GM12878 (cell line): ENCODE measurements at regions of chr2 and their contacts with region 1.

Region 1: DNA sequence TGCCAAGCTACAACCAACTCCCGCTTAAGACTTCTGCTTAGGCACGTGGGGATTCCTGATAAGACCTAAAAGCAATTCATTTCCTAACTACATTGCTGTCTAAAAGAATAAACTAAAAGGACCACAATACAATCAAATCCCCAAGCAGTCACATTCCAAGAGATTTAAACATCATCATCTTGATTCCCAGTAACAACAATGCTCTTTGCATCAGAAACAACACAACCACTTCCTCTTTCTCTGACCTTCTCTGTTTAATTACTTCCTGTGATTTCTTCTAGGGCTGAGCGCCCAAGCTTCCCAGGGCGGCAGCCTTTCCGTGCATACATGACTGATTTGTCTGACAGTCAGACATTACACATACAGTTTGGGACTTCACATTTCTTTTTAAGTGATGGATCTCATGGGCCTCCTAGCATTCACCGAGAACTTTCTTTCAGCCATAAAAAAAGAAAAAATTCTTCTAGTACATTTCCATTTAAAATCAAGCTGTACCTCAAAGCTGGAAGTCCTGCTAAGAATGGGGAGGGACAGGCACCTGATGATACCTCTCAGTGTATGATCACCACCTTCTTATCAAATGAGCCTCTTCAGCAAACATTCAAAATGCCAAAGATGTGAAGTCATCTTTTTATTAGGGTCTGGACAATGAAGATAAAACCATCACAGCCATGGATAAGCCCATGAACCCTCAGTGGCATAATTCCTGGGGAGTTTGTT is 11.5 kb downstream of the SPRED2 start:
- DNase-seq: no peak
- ATAC-seq: peak; percentile 85
- H3K4me3 ChIP-seq: peak overlapping the region; percentile 3; the same call in 1 of the 2 replicates
- H3K27ac ChIP-seq: peak overlapping the region; percentile 49
- H3K4me1 ChIP-seq: peaks cover 28% of the 10 kb centered on the region
- H3K27me3 ChIP-seq: no peaks in the 10 kb centered on the region
- CTCF ChIP-seq: no peak
- EP300 ChIP-seq: peak; percentile 19 to 32; a peak in 1 of 4 replicates
- POLR2A ChIP-seq: no peak
- RAD21 ChIP-seq: 0 out of 2 replicates have a peak, but pooled peaks have one; percentile 2

Region 2: GRCh38 chr2:65396348-65397026 is 24.4 kb before region 1 on chr2:
- CTCF ChIA-PET with region 1: interaction called, 4 read pairs
- POLR2A ChIA-PET with region 1: interaction called, 13 read pairs
- RAD21 ChIA-PET with region 1: interaction called, 15 read pairs
- SMC1A ChIA-PET with region 1: interaction called, 27 read pairs
- in situ Hi-C with region 1: no loop called
- intact Hi-C with region 1: no loop called
- DNase-seq: no peak
- ATAC-seq: peak; percentile 31
- H3K4me3 ChIP-seq: no peak overlapping the region
- H3K27ac ChIP-seq: peak overlapping the region; percentile 22
- H3K4me1 ChIP-seq: peaks cover 53% of the 10 kb centered on the region
- H3K27me3 ChIP-seq: no peaks in the 10 kb centered on the region
- CTCF ChIP-seq: no peak
- EP300 ChIP-seq: no peak
- POLR2A ChIP-seq: no peak
- RAD21 ChIP-seq: no peak

Region 3: DNA sequence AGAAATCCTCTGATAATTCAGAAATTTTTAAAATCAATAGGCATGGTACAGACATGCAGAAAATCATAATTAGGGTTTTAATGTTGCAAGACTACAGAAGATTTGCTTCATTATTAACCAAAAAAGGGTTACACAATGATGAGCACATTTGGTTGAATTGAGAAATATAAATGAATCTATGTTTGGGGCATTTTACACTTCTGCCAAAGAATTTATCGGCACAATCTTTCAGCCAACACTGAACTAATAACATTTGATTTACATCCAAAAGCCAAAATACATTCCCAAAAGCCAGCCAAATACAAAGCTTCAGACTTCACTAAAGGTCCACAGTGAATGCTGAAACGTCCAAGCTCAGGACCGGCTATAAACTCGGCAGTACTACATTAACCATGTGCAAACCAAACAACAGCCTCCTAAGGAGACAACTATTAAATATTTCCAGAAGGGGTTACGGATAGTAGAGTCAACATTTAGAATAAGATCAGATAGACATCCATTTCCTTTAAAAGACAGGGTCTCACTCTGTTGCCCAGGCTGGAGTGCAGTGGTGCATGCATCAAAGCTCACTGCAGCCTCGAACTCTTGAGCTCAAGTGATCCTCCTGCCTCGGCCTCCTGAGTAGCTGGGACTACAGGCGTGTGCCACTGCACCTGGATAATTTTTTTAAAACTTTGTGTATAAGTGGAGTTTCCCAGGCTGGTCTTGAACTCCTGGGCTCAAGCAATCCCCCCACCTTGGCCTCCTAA is 17.9 kb before region 1 on chr2:
- CTCF ChIA-PET with region 1: interaction called, 16 read pairs
- POLR2A ChIA-PET with region 1: interaction called, 25 read pairs
- RAD21 ChIA-PET with region 1: interaction called, 29 read pairs
- SMC1A ChIA-PET with region 1: interaction called, 54 read pairs
- in situ Hi-C with region 1: no loop called
- intact Hi-C with region 1: no loop called
- DNase-seq: no peak
- ATAC-seq: no peak
- H3K4me3 ChIP-seq: no peak overlapping the region
- H3K27ac ChIP-seq: no peak overlapping the region
- H3K4me1 ChIP-seq: peaks cover 22% of the 10 kb centered on the region
- H3K27me3 ChIP-seq: no peaks in the 10 kb centered on the region
- CTCF ChIP-seq: no peak
- EP300 ChIP-seq: no peak
- POLR2A ChIP-seq: no peak
- RAD21 ChIP-seq: no peak

Region 4: GRCh38 chr2:65450393-65450792 is 29.5 kb after region 1 on chr2:
- CTCF ChIA-PET with region 1: no interaction called
- POLR2A ChIA-PET with region 1: no interaction called
- RAD21 ChIA-PET with region 1: no interaction called
- SMC1A ChIA-PET with region 1: no interaction called
- in situ Hi-C with region 1: no loop called
- intact Hi-C with region 1: no loop called
- DNase-seq: no peak
- ATAC-seq: no peak
- H3K4me3 ChIP-seq: no peak overlapping the region
- H3K27ac ChIP-seq: no peak overlapping the region
- H3K4me1 ChIP-seq: no peaks in the 10 kb centered on the region
- H3K27me3 ChIP-seq: no peaks in the 10 kb centered on the region; a peak in 2 of 4 replicates
- CTCF ChIP-seq: no peak
- EP300 ChIP-seq: no peak
- POLR2A ChIP-seq: no peak
- RAD21 ChIP-seq: no peak

Region 5: DNA sequence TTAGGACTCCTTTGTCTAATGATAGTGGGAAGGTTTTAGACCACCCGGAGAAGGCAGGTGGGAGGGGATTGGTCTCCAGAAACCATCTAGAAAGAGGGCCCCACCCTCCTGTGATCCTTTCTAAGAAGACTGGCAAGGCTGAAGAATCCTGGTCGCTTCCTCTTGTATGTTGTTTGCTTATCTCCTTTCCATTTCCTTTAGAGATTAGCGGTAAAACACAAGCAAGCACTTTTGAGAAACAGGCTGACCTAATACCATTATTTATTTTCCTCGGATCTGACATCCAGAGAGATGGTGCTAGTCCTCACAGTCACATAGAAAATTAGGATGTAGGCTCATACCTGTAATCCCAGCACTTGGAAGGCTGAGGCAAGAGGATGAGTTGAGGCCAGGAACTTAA is 56.7 kb after region 1 on chr2:
- CTCF ChIA-PET with region 1: no interaction called
- POLR2A ChIA-PET with region 1: no interaction called
- RAD21 ChIA-PET with region 1: no interaction called
- SMC1A ChIA-PET with region 1: no interaction called
- in situ Hi-C with region 1: no loop called
- intact Hi-C with region 1: no loop called
- DNase-seq: no peak
- ATAC-seq: no peak
- H3K4me3 ChIP-seq: no peak overlapping the region
- H3K27ac ChIP-seq: no peak overlapping the region
- H3K4me1 ChIP-seq: no peaks in the 10 kb centered on the region
- H3K27me3 ChIP-seq: peaks cover 0 to 2% of the 10 kb centered on the region in 2 experiments; a peak in 1 of 4 replicates
- CTCF ChIP-seq: no peak
- EP300 ChIP-seq: no peak
- POLR2A ChIP-seq: no peak
- RAD21 ChIP-seq: no peak

Region 6: DNA sequence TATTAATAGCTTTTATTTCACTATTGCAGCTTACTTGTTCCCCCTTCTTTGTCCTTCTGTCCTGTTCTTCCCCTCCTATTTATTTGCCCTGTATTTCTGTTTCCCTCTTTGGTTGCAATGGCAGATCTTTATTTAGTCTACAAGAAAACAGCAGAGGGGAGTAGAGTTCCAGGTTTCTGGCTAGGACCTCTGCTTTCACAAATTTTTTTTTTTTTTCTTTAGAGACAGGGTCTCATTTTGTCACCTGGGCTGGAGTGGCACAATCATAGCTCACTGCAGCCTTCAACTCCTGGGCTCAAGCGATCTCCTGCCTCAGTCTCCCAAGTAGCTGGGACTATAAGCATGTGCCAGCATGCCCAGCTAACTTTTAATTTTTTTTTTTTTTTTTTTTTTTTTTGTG is 199.7 kb after region 1 on chr2:
- CTCF ChIA-PET with region 1: no interaction called
- POLR2A ChIA-PET with region 1: no interaction called
- RAD21 ChIA-PET with region 1: no interaction called
- SMC1A ChIA-PET with region 1: no interaction called
- in situ Hi-C with region 1: no loop called
- intact Hi-C with region 1: no loop called
- DNase-seq: no peak
- ATAC-seq: no peak
- H3K4me3 ChIP-seq: no peak overlapping the region
- H3K27ac ChIP-seq: no peak overlapping the region
- H3K4me1 ChIP-seq: peaks cover 4% of the 10 kb centered on the region; the same call in 1 of the 2 replicates
- H3K27me3 ChIP-seq: no peaks in the 10 kb centered on the region
- CTCF ChIP-seq: no peak; a peak in 1 of 6 replicates
- EP300 ChIP-seq: no peak
- POLR2A ChIP-seq: no peak
- RAD21 ChIP-seq: no peak